ENCODE measurements at regions of chr16 and their contacts with region 1.

Region 1: GRCh38 chr16:489606-490005 is 37.9 kb upstream of the CAPN15 start:
- H3K4me3 ChIP-seq: no peak overlapping the region
- H3K27ac ChIP-seq: no peak overlapping the region
- H3K4me1 ChIP-seq: no peaks in the 10 kb centered on the region
- CTCF ChIP-seq: no peak

Region 2: DNA sequence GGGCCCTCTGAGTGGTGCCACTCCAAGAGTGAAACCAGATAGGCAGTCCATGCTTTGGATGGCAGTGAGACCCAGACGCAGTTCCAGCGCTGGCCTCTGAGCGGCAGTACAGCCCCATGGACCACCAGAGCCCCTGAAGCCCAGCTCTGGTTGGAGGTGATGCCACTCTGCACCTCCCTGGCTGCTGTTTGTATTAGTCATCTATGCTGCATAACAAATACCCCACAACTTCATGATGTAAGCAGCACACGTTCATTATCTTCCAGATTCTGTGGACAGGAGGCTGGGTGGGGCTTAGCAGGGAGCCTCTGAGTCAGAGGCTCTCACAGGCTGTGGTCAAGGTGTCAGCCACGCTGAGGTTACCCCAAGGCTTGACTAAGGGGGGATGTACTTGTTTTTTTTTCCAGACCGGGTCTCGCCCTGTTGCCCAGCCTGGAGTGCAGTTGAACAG is 97.7 kb before region 1 on chr16:
- CTCF ChIA-PET with region 1: interaction called, 27 read pairs
- POLR2A ChIA-PET with region 1: interaction called, 5 read pairs
- H3K4me3 ChIP-seq: no peak overlapping the region
- H3K27ac ChIP-seq: no peak overlapping the region
- H3K4me1 ChIP-seq: no peaks in the 10 kb centered on the region
- CTCF ChIP-seq: peak; percentile 67